Right ventricle myocardium inferior (tissue), 1 donor: ENCODE measurements at regions of chr14 and their contacts with region 1.

Region 1: DNA sequence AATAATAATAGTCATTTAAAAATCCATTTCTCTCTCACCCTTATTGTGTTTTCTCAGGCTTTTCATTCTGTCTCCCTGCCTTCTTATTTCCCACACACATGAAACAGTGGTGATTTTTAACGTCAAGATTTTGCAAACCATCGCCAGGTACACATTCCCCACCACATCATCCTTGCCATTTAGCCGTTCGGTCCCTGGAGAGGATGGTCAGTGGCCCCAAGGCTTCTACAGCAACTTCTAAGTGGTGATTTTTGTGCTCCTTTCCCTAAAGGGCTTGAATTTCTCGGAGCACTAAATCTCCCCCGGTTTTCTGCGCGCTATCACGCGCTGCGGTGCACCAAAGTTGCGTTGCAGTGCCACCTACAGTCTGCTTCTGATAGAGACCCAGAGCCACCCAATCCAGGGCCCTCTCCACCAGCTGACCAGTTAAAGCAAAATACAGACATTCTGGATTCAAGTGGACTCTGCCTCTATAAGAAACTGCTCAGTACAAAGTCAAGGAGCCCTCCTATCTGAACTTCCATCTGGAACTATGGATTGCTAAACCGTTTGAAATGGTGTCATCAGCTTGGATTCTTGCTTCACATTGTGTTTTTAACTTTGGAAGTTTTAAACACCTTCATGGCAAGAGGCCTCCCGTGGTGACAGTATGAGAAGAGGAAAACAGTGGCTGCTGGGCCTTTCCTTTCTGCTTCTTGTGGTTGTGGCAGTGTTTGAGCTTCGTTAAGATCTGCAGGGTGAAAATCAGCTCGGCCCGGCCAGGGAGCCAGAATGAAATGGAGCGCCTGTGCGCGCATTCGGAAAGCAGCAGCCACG is 234.0 kb downstream of the SPTSSA start:
- DNase-seq: no peak
- ATAC-seq: peak; percentile 89

Region 2: DNA sequence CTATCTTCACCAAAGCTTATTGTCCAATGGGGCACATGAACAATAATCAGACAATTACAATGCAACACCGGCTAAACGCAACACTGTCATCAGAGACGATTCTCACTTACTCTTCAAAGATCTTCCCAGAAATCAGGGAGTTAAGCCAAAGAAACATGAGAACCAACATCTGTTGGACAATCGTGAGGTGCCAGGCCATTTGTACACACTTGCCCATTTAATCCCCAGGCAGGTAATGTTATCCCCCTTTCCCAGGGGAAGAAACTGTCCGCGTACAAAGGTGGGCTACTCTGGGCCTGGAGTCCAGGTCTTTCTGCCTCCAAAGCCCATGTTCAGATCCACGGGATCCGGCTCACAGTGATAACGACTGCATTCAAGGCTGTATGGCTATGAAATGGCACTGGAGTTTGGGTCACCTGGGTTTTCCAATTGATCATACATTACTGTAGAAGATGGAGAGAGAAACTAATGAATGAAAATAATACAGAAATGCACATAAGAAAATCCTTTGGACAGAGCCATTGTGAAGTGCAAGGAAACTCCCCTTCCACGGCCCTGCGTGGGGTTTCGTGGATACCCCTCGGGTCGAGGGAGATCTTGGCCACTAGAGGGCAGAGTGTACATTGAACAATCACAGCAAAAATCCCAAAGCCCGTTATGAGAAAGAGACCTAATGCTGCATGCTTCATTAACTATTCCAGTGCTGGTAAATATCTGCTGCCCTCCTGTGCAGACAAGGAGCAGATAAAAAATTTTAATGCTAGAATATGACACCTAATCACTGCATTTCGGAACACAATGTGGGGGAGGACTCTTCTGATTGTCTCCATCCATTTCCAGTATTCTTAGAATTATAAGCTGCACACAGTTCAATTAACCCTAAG is 388.6 kb before region 1 on chr14:
- intact Hi-C with region 1: loop called (anchors 2 kb)
- DNase-seq: no peak
- ATAC-seq: peak; percentile 76

Region 3: GRCh38 chr14:33950320-33951182 is 277.5 kb before region 1 on chr14 and contains the start of gene EGLN3:
- intact Hi-C with region 1: loop called (anchors 5 kb)
- DNase-seq: peak; percentile 93
- ATAC-seq: peak; percentile 99
- total RNA-seq, gene EGLN3: 136 TPM

Region 4: GRCh38 chr14:34059855-34060638 is 168.0 kb before region 1 on chr14:
- intact Hi-C with region 1: loop called (anchors 2 kb)
- DNase-seq: peak; percentile 89
- ATAC-seq: peak; percentile 94

Region 5: GRCh38 chr14:34098045-34098984 is 129.7 kb before region 1 on chr14:
- intact Hi-C with region 1: loop called (anchors 2 kb)
- DNase-seq: no peak
- ATAC-seq: peak; percentile 48

Region 6: DNA sequence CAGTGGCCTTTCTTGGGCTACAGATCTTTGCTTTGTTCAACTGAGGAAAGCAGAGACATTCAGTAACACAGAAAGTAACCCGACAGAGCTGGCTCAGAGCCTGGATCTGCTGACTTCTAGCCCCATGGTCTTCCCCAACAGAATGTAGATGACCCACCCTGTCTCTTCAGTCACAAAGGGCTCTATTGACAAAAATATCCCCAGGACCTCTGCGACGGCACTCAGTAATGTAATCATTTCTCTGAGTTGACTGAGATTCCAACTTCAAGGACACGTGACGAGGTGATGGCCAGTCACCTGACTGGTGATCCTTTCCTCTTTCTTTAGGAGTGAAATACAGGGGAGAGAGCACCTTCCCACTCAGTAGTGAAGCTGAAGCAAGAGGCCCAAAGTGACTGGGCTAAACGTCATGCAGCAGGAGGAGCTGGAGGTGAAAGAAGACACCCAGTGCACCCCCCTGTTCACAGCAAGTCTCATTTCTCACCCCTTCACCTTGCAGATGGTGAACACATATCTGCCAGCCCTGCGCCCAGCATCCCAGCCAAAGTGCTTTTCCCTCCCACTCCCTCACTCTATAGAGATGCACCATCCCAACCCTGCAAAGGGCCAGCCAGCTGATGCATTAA is 98.0 kb before region 1 on chr14:
- intact Hi-C with region 1: loop called (anchors 5 kb)
- DNase-seq: no peak
- ATAC-seq: no peak

Region 7: GRCh38 chr14:34300882-34301734 is 73.1 kb after region 1 on chr14:
- intact Hi-C with region 1: loop called (anchors 5 kb)
- DNase-seq: no peak
- ATAC-seq: peak; percentile 43

Region 8: GRCh38 chr14:34365309-34365915 is 137.4 kb after region 1 on chr14:
- intact Hi-C with region 1: no loop called
- DNase-seq: no peak
- ATAC-seq: no peak